ENCODE measurements at regions of chr1 and their contacts with region 1.

Region 1: DNA sequence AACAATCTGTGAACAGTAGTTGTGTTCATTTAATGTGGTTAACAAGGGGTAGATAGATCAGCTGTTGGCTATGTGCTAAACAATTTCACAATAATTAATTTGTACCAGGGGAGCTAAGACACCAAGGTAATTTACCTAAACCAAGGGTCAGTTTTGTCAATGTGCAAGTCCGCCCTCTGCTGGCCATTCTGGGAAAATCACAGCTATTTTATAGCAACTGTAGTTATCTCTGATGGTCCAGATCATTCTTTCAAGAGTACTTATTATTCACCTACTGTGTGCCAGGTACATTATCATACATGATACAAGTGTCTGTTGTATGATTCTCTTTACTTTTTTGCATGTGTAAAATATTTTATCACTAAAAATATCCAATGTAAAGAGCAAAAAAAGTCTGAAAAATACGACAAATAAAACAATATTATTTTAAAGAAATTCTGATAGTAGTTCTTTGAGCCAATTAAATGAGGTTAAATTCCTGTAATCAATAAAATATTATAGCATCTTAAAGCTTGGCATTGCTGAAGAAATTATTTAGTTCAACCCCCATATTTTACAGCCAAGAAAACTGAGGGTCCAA is 312.3 kb upstream of the FAM78B start:
- DNase-seq: peak; percentile 83
- H3K4me3 Mint-ChIP-seq: no peak overlapping the region
- H3K27ac Mint-ChIP-seq: no peak overlapping the region
- H3K4me1 Mint-ChIP-seq: no peaks in the 10 kb centered on the region
- H3K27me3 Mint-ChIP-seq: peaks cover 2% of the 10 kb centered on the region

Region 2: DNA sequence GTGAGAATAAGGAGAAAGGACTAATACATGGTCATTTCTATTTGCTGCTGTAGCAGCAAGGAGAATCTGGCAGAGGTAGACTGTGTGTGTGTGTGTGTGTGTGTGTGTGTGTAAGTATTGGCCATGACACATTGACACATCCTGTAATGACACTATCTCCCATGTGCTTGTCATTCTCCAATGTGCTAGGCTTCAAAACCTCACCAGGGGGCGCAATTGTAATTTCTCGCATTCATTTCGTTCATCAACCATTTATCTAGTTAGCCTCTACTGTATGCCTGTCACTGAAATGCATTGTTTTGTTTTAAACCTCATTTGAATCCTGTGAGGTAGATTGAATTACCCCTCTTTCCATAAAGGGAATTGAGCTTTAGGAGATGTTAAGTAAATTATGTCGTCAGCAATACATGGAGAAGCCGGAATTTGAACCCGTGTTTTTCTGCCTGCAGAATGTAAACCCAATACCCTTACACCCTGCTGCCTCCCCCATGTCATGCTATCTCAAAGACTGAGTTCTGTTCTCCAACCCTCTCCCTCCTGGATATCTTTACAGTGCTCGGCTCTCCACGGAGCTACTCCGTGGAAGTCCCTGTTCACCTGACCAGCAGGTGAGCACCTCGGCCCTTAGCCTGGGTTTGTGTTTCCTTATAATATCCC is 550.9 kb before region 1 on chr1:
- intact Hi-C with region 1: loop called (anchors 1 kb)
- DNase-seq: peak; percentile 87
- H3K4me3 Mint-ChIP-seq: no peak overlapping the region
- H3K27ac Mint-ChIP-seq: peak overlapping the region; percentile 13
- H3K4me1 Mint-ChIP-seq: peaks cover 11% of the 10 kb centered on the region
- H3K27me3 Mint-ChIP-seq: peaks cover 10% of the 10 kb centered on the region

Region 3: DNA sequence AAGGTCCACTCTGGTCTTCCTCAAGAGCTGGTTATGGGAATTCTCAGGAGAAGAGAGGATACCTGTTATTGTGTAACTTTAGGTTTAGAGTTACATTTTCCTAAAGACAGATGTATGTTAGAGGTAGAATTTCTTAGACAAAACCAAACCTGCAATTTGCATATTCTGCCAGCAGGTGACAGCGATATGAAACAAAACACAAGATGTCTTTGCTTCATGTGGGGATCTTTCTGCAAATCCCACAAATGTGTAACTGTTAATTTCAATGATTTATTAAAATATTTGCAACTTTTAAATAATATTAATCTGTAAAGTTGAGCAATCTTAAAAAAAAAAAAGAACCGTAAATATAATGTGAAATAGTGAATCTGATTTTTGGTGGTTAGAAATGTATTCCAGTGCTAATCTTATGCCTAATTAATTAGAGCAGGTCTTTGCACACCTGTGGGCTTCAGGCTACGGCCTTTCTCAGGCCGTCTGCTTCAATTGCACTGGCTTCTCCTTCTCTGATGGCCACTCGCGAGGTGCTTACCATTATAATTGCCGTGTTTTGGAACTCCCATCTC is 345.8 kb before region 1 on chr1:
- intact Hi-C with region 1: loop called (anchors 10 kb)
- DNase-seq: no peak
- H3K4me3 Mint-ChIP-seq: no peak overlapping the region
- H3K27ac Mint-ChIP-seq: no peak overlapping the region
- H3K4me1 Mint-ChIP-seq: no peaks in the 10 kb centered on the region
- H3K27me3 Mint-ChIP-seq: peaks cover 2% of the 10 kb centered on the region

Region 4: GRCh38 chr1:166544561-166544960 is 65.4 kb after region 1 on chr1:
- intact Hi-C with region 1: no loop called
- DNase-seq: no peak
- H3K4me3 Mint-ChIP-seq: no peak overlapping the region
- H3K27ac Mint-ChIP-seq: no peak overlapping the region
- H3K4me1 Mint-ChIP-seq: no peaks in the 10 kb centered on the region
- H3K27me3 Mint-ChIP-seq: no peaks in the 10 kb centered on the region